HEK293 (cell line): ENCODE measurements at regions of chr4 and their contacts with region 1.

Region 1: DNA sequence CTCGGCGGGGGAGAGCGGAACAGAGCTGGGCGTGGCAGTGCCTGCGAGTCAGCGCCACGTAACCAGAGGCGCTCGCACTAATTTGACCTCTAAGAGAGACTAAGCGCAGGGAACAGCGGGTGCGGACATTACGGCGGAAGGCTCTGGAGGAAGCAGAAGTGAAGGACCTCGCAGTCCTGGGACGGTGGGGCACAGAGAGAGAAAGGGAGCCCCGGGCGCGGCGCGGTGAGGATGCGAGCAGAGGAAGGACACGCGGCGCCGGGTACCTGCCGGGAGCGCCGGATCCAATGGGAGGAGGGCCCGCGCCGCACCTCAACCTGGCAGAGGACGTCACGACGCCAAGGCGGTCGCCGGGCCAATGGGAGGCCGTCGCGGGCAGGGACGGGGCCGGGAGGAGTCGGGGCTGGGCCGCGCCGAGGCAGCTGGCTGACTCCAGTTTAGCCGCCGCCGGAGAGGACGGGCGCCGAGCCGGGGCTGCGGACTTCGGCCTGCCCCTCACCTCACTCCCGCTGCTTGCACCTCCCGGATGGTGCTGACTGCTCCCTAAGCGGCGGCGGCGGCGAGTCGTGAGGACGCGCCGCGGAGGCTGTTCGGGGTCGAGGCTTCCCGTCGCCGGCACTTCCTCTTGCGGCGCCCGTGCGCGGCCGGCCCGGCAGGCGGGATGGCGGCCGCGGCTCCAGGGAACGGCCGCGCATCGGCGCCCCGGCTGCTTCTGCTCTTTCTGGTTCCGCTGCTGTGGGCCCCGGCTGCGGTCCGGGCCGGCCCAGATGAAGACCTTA is at the start of gene TMEM165:
- H3K4me3 ChIP-seq: peak within 1 kb of the TSS; percentile 89
- H3K27ac ChIP-seq: peak within 1 kb of the TSS; percentile 87
- H3K4me1 ChIP-seq: no peaks in the 10 kb centered on the region
- CTCF ChIP-seq: peak; percentile 29; the same call in 1 of the 2 replicates

Region 2: GRCh38 chr4:55546756-55547465 is 151.2 kb after region 1 on chr4 and contains the start of gene CLOCK:
- CTCF ChIA-PET with region 1: no interaction called
- POLR2A ChIA-PET with region 1: interaction called, 14 read pairs
- H3K4me3 ChIP-seq: peak within 1 kb of the TSS; percentile 66
- H3K27ac ChIP-seq: peak within 1 kb of the TSS; percentile 84
- H3K4me1 ChIP-seq: no peaks in the 10 kb centered on the region
- CTCF ChIP-seq: peak; percentile 90